Activated naive CD4-positive, alpha-beta T cell treated with anti-CD3 and anti-CD28 coated beads, Interleukin-2, amount 10 ng/mL, durations not matched to agents 7 days and 5 days (primary cell): ENCODE measurements at regions of chr20 and their contacts with region 1.

Region 1: GRCh38 chr20:63223221-63224207 is 7.6 kb upstream of the YTHDF1 start:
- DNase-seq: peak; percentile 65
- H3K4me3 Mint-ChIP-seq: no peak overlapping the region
- H3K27ac Mint-ChIP-seq: peak overlapping the region; percentile 30
- H3K4me1 Mint-ChIP-seq: no peaks in the 10 kb centered on the region
- H3K27me3 Mint-ChIP-seq: peaks cover 55% of the 10 kb centered on the region

Region 2: GRCh38 chr20:63234739-63235398 is 11.4 kb after region 1 on chr20:
- CTCF ChIA-PET with region 1: interaction called, 42 read pairs
- DNase-seq: peak; percentile 39
- H3K4me3 Mint-ChIP-seq: no peak overlapping the region
- H3K27ac Mint-ChIP-seq: no peak overlapping the region
- H3K4me1 Mint-ChIP-seq: no peaks in the 10 kb centered on the region
- H3K27me3 Mint-ChIP-seq: peaks cover 58% of the 10 kb centered on the region

Region 3: GRCh38 chr20:63265891-63266515 is 42.5 kb after region 1 on chr20:
- CTCF ChIA-PET with region 1: interaction called, 10 read pairs
- DNase-seq: no peak
- H3K4me3 Mint-ChIP-seq: no peak overlapping the region
- H3K27ac Mint-ChIP-seq: no peak overlapping the region
- H3K4me1 Mint-ChIP-seq: peaks cover 11% of the 10 kb centered on the region
- H3K27me3 Mint-ChIP-seq: peaks cover 57% of the 10 kb centered on the region

Region 4: DNA sequence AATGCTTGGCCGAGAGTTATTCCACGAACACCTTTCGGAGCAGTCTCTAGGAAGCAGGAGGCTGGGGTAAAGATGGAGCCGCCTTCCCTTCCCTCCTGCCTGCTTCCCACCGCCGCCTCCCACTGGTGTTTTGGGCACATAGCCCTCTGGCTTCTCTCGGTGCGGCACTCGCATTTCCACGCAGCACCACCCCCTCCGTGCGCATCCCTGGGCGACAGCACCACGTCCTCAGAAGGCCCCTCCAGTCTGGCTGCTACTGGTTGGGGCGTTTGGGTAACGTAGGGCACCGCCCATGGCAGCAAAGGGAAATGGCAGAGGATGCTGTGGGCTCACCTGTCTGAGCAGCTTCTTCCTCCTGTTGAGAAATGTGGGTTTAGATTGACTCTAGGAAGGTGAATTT is 71.9 kb after region 1 on chr20:
- CTCF ChIA-PET with region 1: interaction called, 10 read pairs
- DNase-seq: peak; percentile 39
- H3K4me3 Mint-ChIP-seq: no peak overlapping the region
- H3K27ac Mint-ChIP-seq: no peak overlapping the region
- H3K4me1 Mint-ChIP-seq: peaks cover 13% of the 10 kb centered on the region
- H3K27me3 Mint-ChIP-seq: peaks cover 54% of the 10 kb centered on the region

Region 5: DNA sequence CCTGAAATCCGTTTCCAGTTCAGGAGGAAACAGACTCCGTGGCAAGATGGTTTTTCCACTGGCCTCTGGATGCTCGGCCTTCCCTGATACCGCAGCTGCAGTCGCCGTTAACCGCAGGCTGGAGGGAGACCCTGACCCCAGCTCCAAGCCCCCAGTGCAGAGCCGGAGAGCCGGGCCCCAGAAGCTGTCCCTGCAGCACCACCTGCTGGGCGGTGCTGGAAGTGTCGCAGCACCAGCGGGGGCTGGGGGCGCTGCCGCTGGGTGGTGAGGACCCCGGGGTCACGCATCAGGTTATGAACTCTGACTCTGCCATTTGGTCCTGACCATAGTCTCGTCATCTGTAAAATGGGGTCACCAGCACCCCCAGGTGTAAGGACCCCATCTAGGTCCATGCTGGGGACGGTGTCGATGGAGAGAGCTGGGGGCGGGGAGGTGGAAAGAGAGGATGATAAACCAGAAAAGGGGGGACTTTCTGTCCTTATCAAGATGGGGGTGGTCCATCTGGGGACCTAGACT is 158.4 kb after region 1 on chr20:
- CTCF ChIA-PET with region 1: interaction called, 16 read pairs
- DNase-seq: peak; percentile 47
- H3K4me3 Mint-ChIP-seq: no peak overlapping the region
- H3K27ac Mint-ChIP-seq: no peak overlapping the region
- H3K4me1 Mint-ChIP-seq: no peaks in the 10 kb centered on the region
- H3K27me3 Mint-ChIP-seq: peaks cover 29% of the 10 kb centered on the region

Region 6: DNA sequence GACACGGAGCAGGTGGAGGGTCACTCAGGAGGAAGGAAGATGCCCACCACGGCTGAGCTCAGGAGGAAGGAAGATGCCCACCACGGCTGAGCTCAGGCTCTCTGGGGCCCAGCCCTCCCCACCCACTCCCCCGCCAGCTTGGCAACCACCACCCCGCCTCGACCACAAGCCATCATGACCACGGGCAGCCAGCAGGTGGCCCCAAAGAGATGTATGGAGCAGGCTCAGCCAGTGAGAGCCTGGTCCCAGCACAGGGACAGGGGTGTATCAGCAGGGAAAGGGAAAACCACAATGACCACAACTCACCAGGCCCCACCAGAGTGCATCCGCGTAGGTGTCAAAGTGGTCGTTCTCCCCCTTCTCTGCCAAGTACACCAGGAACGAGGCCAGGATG is 218.6 kb after region 1 on chr20:
- CTCF ChIA-PET with region 1: no interaction called
- DNase-seq: peak; percentile 68
- H3K4me3 Mint-ChIP-seq: no peak overlapping the region
- H3K27ac Mint-ChIP-seq: no peak overlapping the region
- H3K4me1 Mint-ChIP-seq: peaks cover 16% of the 10 kb centered on the region
- H3K27me3 Mint-ChIP-seq: peaks cover 42% of the 10 kb centered on the region